Left ventricle myocardium inferior (tissue), 1 donor: ENCODE measurements at regions of chr6 and their contacts with region 1.

Region 1: DNA sequence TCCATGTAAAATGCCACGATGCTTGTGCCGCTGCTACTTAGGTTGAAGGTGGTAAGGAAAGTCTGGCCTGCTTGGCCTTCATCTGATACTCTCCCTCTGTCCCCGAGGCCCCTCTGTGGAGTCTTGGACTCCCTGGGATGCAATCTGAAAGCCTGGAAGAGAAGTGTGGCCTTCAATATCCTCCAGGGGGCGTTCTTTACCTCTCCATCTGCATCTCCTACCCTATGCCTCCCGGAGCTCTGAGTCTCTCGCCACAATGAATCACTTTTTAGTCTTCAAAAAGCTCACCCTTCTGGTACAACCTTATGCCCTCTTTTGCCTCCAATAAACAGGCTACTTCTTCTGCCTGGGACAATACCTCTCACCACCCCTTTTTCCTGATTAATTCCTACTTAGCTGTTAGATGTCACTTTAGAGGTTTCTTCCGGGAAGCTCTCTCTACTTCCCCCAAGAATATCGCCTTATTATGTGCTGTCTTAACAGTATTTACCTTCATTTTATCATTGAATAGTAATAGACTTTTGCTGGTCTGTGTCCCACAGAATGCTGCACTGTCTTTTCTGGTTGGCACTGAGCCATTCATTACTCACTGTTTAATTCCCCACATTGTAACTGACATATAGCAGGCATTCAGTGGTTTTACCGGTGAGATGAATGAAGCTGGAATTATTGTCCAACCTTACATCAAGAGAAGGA is 13.9 kb upstream of the ATG5 start:
- DNase-seq: no peak
- H3K4me3 ChIP-seq: no peak overlapping the region
- H3K27ac ChIP-seq: no peak overlapping the region
- H3K4me1 ChIP-seq: no peaks in the 10 kb centered on the region
- H3K27me3 ChIP-seq: no peaks in the 10 kb centered on the region
- CTCF ChIP-seq: peak; percentile 78

Region 2: GRCh38 chr6:106560996-106561685 is 221.7 kb after region 1 on chr6:
- intact Hi-C with region 1: loop called (anchors 10 kb)
- DNase-seq: no peak
- H3K4me3 ChIP-seq: no peak overlapping the region
- H3K27ac ChIP-seq: no peak overlapping the region
- H3K4me1 ChIP-seq: peaks cover 16% of the 10 kb centered on the region
- H3K27me3 ChIP-seq: no peaks in the 10 kb centered on the region
- CTCF ChIP-seq: no peak

Region 3: DNA sequence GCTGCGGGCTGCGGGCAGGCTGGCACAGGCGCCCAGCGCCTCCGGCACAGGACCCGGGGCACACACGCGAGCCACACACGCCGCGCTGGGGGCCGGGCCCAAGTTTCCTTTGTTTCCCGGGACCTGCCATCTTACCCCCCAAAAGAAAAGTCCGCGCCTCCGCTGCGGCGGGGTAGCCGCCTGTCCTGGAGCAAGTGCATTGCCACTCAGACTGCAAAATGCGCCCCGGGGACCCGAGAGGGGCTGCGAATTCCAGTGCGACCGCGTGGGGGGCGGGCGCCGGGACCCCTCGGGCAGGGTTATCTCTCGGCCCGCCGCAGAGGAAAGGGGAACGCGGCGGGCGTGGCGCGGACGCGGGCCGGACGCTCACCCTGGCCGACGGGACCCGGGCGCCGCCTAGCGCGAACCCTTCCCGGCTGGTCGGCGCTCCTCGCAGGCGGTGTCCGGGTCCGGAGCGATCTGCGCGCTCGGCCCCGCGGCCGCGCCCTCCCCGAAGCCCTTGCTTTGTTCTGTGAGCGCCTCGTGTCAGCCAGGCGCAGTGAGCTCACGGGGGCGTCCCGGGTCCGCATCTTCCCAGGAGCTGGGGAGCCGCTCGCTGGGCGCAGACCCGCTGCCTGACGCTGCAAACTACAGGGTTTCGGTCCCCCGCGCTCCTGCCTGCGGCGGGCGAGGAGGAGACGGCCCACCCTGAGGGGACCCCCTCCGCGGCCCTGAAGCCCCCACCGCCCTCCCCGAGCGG is 635.7 kb after region 1 on chr6:
- intact Hi-C with region 1: no loop called
- DNase-seq: peak; percentile 29
- H3K4me3 ChIP-seq: peak overlapping the region; percentile 71
- H3K27ac ChIP-seq: no peak overlapping the region
- H3K4me1 ChIP-seq: peaks cover 26% of the 10 kb centered on the region
- H3K27me3 ChIP-seq: peaks cover 96% of the 10 kb centered on the region
- CTCF ChIP-seq: peak; percentile 4